SK-N-SH (cell line): ENCODE measurements at regions of chr14 and their contacts with region 1.

Region 1: GRCh38 chr14:32560209-32560857 is 231.2 kb downstream of the AKAP6 start:
- DNase-seq: peak; percentile 59
- H3K4me3 ChIP-seq: no peak overlapping the region; a peak in 1 of 4 replicates
- H3K27ac ChIP-seq: peak overlapping the region; percentile 83 to 89
- H3K4me1 ChIP-seq: peaks cover under 1 to 33% of the 10 kb centered on the region in 2 experiments; a peak in 2 of 4 replicates
- H3K27me3 ChIP-seq: no peaks in the 10 kb centered on the region
- CTCF ChIP-seq: peak; percentile 96
- EP300 ChIP-seq: no peak
- RAD21 ChIP-seq: peak; percentile 95

Region 2: GRCh38 chr14:32259368-32260013 is 300.8 kb before region 1 on chr14:
- CTCF ChIA-PET with region 1: interaction called, 13 read pairs
- POLR2A ChIA-PET with region 1: no interaction called
- DNase-seq: peak; percentile 58
- H3K4me3 ChIP-seq: no peak overlapping the region
- H3K27ac ChIP-seq: peak overlapping the region in 1 of 2 experiments; percentile 58; a peak in 2 of 4 replicates
- H3K4me1 ChIP-seq: peaks cover 9 to 19% of the 10 kb centered on the region in 2 experiments; a peak in 3 of 4 replicates
- H3K27me3 ChIP-seq: no peaks in the 10 kb centered on the region
- CTCF ChIP-seq: no peak
- EP300 ChIP-seq: peak; percentile 70 to 83; a peak in 2 of 4 replicates
- RAD21 ChIP-seq: no peak; the same call in 1 of the 2 replicates

Region 3: GRCh38 chr14:32469388-32470160 is 90.8 kb before region 1 on chr14:
- CTCF ChIA-PET with region 1: interaction called, 20 read pairs
- POLR2A ChIA-PET with region 1: no interaction called
- DNase-seq: no peak
- H3K4me3 ChIP-seq: peak overlapping the region in 1 of 2 experiments; percentile 3; a peak in 1 of 4 replicates
- H3K27ac ChIP-seq: peak overlapping the region; percentile 90 to 98
- H3K4me1 ChIP-seq: peaks cover 11 to 48% of the 10 kb centered on the region in 2 experiments
- H3K27me3 ChIP-seq: no peaks in the 10 kb centered on the region
- CTCF ChIP-seq: peak; percentile 84
- EP300 ChIP-seq: no peak
- RAD21 ChIP-seq: peak; percentile 83

Region 4: DNA sequence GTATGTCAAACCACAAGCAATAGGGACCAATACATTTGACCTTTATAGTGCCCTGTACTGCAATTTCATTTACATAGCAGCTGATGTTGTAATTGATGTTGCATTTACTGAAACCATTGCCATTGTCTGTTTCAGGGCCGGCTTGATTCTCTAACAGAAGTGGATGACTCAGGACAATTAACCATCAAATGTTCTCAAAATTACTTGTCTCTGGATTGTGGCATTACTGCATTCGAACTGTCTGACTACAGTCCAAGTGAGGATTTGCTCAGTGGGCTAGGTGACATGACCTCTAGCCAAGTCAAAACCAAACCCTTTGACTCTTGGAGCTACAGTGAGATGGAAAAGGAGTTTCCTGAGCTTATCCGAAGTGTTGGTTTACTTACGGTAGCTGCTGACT is 15.2 kb before region 1 on chr14:
- CTCF ChIA-PET with region 1: interaction called, 21 read pairs
- POLR2A ChIA-PET with region 1: no interaction called
- DNase-seq: no peak
- H3K4me3 ChIP-seq: no peak overlapping the region
- H3K27ac ChIP-seq: no peak overlapping the region
- H3K4me1 ChIP-seq: no peaks in the 10 kb centered on the region
- H3K27me3 ChIP-seq: no peaks in the 10 kb centered on the region
- CTCF ChIP-seq: no peak
- EP300 ChIP-seq: no peak
- RAD21 ChIP-seq: no peak

Region 5: GRCh38 chr14:32576088-32576795 is 15.9 kb after region 1 on chr14:
- CTCF ChIA-PET with region 1: interaction called, 18 read pairs
- POLR2A ChIA-PET with region 1: no interaction called
- DNase-seq: peak; percentile 58
- H3K4me3 ChIP-seq: no peak overlapping the region; a peak in 1 of 4 replicates
- H3K27ac ChIP-seq: peak overlapping the region; percentile 7 to 58; a peak in 2 of 4 replicates
- H3K4me1 ChIP-seq: peaks cover 6 to 7% of the 10 kb centered on the region in 2 experiments; a peak in 3 of 4 replicates
- H3K27me3 ChIP-seq: no peaks in the 10 kb centered on the region
- CTCF ChIP-seq: peak; percentile 98
- EP300 ChIP-seq: no peak
- RAD21 ChIP-seq: peak; percentile 96